ENCODE measurements at regions of chr13 and their contacts with region 1.

Region 1: DNA sequence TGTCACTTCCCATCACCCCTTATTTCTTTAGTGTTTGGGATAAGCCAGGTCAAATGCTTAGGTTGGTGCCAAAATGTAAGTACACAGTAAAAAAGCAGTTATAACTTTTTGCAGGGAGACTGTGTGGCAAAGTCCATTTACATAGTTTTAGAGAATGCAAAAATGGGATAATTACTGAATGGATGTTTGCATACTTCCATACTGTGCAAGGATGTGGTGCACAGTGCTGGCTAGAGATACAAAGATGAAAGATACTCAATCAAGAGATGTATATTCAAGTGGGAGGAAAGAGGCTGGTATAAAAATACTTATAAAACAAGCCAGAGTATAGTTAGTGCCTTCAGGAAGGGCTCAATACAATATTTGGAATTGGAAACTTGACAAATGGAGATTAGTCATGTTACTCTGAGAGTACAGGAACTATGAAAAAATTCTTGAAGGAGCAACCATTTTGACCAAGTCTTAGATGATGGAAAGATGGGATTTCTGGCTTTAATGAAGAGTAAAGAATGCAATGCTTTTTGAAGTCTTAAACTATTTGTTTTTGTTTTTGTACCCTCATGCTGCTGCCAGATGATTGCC is 8.0 kb downstream of the PDS5B start:
- DNase-seq: no peak
- ATAC-seq: no peak
- H3K4me3 Mint-ChIP-seq: no peak overlapping the region
- H3K27ac Mint-ChIP-seq: no peak overlapping the region
- H3K4me1 Mint-ChIP-seq: peaks cover 45% of the 10 kb centered on the region
- H3K27me3 Mint-ChIP-seq: no peaks in the 10 kb centered on the region
- CTCF ChIP-seq: no peak

Region 2: GRCh38 chr13:32610538-32610937 is 16.3 kb after region 1 on chr13:
- CTCF ChIA-PET with region 1: no interaction called
- POLR2A ChIA-PET with region 1: no interaction called
- intact Hi-C with region 1: loop called (anchors 2 kb)
- DNase-seq: no peak
- ATAC-seq: no peak
- H3K4me3 Mint-ChIP-seq: no peak overlapping the region
- H3K27ac Mint-ChIP-seq: no peak overlapping the region
- H3K4me1 Mint-ChIP-seq: peaks cover 48% of the 10 kb centered on the region
- H3K27me3 Mint-ChIP-seq: no peaks in the 10 kb centered on the region
- CTCF ChIP-seq: no peak

Region 3: DNA sequence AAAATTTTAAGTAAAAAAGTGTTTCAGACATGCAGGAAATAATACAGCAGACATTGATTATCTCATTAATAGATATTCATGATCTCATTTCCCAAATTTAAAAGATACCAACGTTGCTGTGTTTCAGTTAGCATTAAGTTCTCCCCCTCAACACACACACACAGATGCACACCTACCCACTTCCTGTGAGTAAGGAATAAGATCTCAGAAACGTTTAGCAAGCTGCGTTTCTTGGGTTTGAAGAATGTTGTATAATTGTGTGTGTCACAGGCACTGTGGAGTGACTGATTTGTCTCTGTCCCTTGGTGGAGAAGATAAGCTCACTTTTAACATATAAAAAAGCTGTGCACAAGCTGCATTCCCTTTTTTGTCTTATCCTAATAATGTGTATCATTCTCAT is 188.8 kb after region 1 on chr13:
- CTCF ChIA-PET with region 1: no interaction called
- POLR2A ChIA-PET with region 1: no interaction called
- intact Hi-C with region 1: no loop called
- DNase-seq: no peak
- ATAC-seq: no peak
- H3K4me3 Mint-ChIP-seq: no peak overlapping the region
- H3K27ac Mint-ChIP-seq: no peak overlapping the region
- H3K4me1 Mint-ChIP-seq: no peaks in the 10 kb centered on the region
- H3K27me3 Mint-ChIP-seq: no peaks in the 10 kb centered on the region
- CTCF ChIP-seq: no peak